HCT116 (cell line): ENCODE measurements at regions of chr2 and their contacts with region 1.

Region 1: DNA sequence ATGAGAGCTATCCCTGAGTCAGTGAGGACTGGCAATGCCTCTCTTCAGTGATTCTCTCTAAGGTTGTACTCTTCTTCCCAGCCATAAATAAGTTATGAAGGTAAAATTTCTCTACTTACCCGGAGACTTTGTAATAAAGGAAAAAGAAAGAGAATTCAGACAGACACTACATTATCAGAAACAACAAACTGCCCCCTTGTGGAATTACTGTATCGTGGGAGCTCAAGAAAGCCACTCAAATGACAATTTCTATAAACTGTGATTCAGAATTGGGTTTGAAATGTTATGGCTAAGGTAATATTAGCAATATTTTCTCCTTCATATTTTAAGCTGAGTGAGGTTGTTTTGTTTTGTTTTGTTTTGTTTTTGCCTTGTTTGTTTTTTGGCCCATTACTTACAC is 155.8 kb upstream of the TANK start:
- DNase-seq: peak; percentile 4
- ATAC-seq: peak; percentile 63
- H3K4me3 ChIP-seq: no peak overlapping the region
- H3K27ac ChIP-seq: no peak overlapping the region
- H3K4me1 ChIP-seq: no peaks in the 10 kb centered on the region
- H3K27me3 ChIP-seq: no peaks in the 10 kb centered on the region
- CTCF ChIP-seq: peak; percentile 35 to 47 (median 44); a peak in 4 of 6 replicates
- POLR2A ChIP-seq: no peak
- RAD21 ChIP-seq: peak; percentile 45; the same call in 1 of the 2 replicates

Region 2: GRCh38 chr2:160324161-160324800 is 680.1 kb before region 1 on chr2:
- CTCF ChIA-PET with region 1: interaction called, 12 read pairs
- POLR2A ChIA-PET with region 1: no interaction called
- RAD21 ChIA-PET with region 1: no interaction called
- intact Hi-C with region 1: no loop called
- DNase-seq: peak; percentile 26
- ATAC-seq: peak; percentile 87
- H3K4me3 ChIP-seq: no peak overlapping the region
- H3K27ac ChIP-seq: no peak overlapping the region
- H3K4me1 ChIP-seq: no peaks in the 10 kb centered on the region
- H3K27me3 ChIP-seq: no peaks in the 10 kb centered on the region
- CTCF ChIP-seq: peak; percentile 61 to 75 (median 74); a peak in 5 of 6 replicates
- POLR2A ChIP-seq: no peak
- RAD21 ChIP-seq: peak; percentile 76

Region 3: GRCh38 chr2:161063157-161063954 is 59.0 kb after region 1 on chr2:
- CTCF ChIA-PET with region 1: interaction called, 13 read pairs
- POLR2A ChIA-PET with region 1: no interaction called
- RAD21 ChIA-PET with region 1: interaction called in 1 of 2 experiments, 5 read pairs
- intact Hi-C with region 1: no loop called
- DNase-seq: peak; percentile 75
- ATAC-seq: peak; percentile 97
- H3K4me3 ChIP-seq: no peak overlapping the region
- H3K27ac ChIP-seq: no peak overlapping the region
- H3K4me1 ChIP-seq: peaks cover 0 to 9% of the 10 kb centered on the region in 2 experiments; a peak in 3 of 4 replicates
- H3K27me3 ChIP-seq: no peaks in the 10 kb centered on the region
- CTCF ChIP-seq: peak; percentile 60 to 93 (median 90); a peak in 5 of 6 replicates
- POLR2A ChIP-seq: no peak
- RAD21 ChIP-seq: peak; percentile 87